ENCODE measurements at regions of chr10 and their contacts with region 1.

Region 1: GRCh38 chr10:58518775-58519174 is 6.1 kb downstream of the BICC1 start:
- DNase-seq: no peak
- H3K4me3 ChIP-seq: no peak overlapping the region
- H3K27me3 ChIP-seq: no peaks in the 10 kb centered on the region
- CTCF ChIP-seq: no peak

Region 2: GRCh38 chr10:58531084-58531695 is 12.4 kb after region 1 on chr10:
- CTCF ChIA-PET with region 1: interaction called, 13 read pairs
- POLR2A ChIA-PET with region 1: no interaction called
- DNase-seq: no peak
- H3K4me3 ChIP-seq: no peak overlapping the region
- H3K27me3 ChIP-seq: no peaks in the 10 kb centered on the region
- CTCF ChIP-seq: peak; percentile 76

Region 3: DNA sequence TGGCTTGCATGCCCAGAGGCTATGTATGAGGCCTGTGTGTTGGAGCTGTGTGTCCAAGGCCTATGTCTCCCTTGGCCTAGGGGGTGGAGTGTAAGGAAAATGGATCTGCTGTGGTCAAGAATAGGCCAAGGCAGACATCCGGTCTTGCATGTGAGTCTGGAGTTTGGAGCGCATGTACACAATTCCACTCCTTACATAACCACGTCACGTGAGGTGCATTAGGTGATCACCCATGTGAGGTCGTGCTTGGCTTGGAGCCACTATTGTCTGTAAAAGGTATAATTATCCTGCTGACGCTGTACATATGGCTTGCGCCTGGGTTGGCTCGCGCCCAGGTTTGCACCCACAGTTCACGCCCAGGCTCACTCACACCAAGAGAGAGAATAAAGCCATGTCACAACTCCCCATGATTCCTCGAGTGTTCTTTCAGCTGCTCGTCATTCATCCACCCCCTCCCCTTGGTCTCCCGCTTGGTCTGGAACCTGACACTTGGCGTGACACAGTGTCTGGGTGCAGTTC is 99.4 kb after region 1 on chr10:
- CTCF ChIA-PET with region 1: no interaction called
- POLR2A ChIA-PET with region 1: no interaction called
- DNase-seq: no peak
- H3K4me3 ChIP-seq: no peak overlapping the region
- H3K27me3 ChIP-seq: no peaks in the 10 kb centered on the region
- CTCF ChIP-seq: no peak